Heart right ventricle (tissue), 16 donors: ENCODE measurements at regions of chr3 and their contacts with region 1.

Region 1: DNA sequence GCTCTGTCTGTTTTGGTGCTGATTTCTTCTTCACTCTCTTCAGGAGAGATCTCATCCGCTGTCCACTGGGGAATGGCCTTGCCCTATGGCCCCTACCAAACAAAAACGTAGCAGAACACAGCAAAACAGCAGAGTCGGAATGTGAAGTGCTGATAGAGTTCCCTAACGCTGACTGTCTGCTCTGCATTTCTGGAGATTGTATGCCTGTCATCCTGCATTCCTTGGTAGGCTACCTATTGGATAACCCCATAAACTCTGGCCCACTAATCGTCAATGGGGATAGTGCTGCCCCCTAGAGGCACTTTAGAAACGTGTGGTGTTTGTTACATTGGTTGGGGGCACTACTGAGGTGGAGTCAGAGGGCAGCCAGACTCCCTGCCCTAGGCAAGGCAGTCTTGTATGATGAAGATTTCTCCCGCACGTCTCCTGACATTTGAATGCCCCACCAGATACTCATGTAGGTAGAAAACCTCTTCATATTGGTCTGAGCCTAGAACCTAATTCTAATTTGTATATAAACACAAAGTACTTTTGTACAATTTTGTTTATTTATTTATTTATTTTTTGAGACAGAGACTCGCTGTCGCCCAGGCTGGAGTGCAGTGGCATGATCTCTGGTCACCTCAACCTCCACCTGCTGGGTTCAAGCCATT is 15.6 kb upstream of the MAGEF1 start:
- DNase-seq: peak in 1 of 2 donors; percentile 67
- ATAC-seq: peak; percentile 69 to 93 (median 88)
- H3K4me3 ChIP-seq: no peak overlapping the region
- H3K27ac ChIP-seq: no peak overlapping the region
- H3K4me1 ChIP-seq: peaks cover 0 to 13% (median 0%) of the 10 kb centered on the region in 9 donors
- H3K27me3 ChIP-seq: no peaks in the 10 kb centered on the region
- CTCF ChIP-seq: peak; percentile 47 to 83 (median 77)

Region 2: GRCh38 chr3:184561061-184561912 is 166.2 kb before region 1 on chr3 and contains the start of gene EPHB3:
- intact Hi-C with region 1: loop called in 3 of 10 experiments (anchors 1 to 2 kb)
- DNase-seq: peak; percentile 98
- ATAC-seq: peak; percentile 96 to 98 (median 97)
- H3K4me3 ChIP-seq: peak within 1 kb of the TSS; percentile 47 to 77 (median 68)
- H3K27ac ChIP-seq: peak within 1 kb of the TSS in 7 of 10 donors; percentile 45 to 77 (median 63)
- H3K4me1 ChIP-seq: peaks cover 6 to 51% (median 27%) of the 10 kb centered on the region in 9 donors
- H3K27me3 ChIP-seq: peaks cover 0 to 54% (median 28%) of the 10 kb centered on the region in 7 donors
- CTCF ChIP-seq: peak; percentile 86 to 100 (median 99)
- total RNA-seq, gene EPHB3: 0.38 to 4.0 (median 2.3) TPM

Region 3: GRCh38 chr3:184757022-184757651 is 29.7 kb after region 1 on chr3:
- intact Hi-C with region 1: no loop called
- DNase-seq: peak; percentile 51 to 79
- ATAC-seq: peak; percentile 71 to 95 (median 86)
- H3K4me3 ChIP-seq: peak overlapping the region in 6 of 10 donors; percentile 13 to 27 (median 24)
- H3K27ac ChIP-seq: peak overlapping the region in 6 of 10 donors; percentile 10 to 64 (median 60)
- H3K4me1 ChIP-seq: peaks cover 0 to 42% (median 14%) of the 10 kb centered on the region in 9 donors
- H3K27me3 ChIP-seq: no peaks in the 10 kb centered on the region
- CTCF ChIP-seq: no peak